Posterior cingulate gyrus (tissue), 11 donors: ENCODE measurements at regions of chr18 and their contacts with region 1.

Region 1: GRCh38 chr18:35580701-35581539 is 620 bp upstream of the GALNT1 start:
- DNase-seq: peak; percentile 35 to 93 (median 53)

Region 2: DNA sequence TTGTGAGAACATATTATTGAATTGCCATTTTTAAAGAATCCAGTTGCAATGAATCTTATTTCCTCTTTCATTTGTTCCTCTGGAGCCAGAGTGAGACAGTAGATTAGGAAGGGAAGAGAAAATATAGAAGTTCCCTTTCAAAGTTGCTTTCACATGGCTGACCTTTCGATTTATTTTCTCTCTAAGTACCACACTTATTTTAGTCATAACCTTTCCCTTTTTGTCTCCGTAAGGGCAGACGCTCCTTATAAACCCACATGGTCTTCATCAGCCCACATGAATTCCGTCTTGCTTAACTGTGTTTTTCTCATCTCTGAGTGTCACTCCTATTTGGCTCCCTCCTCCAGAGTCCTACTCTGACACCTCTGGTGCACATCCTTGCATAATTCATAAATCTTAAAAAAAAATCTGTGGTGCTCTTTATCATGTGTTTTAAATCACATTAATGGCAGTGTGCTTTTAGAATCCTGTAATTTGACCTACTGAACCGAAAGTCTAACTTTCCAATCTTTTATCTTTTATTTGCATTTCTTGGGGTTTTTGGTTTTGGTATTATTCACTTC is 165.3 kb before region 1 on chr18:
- intact Hi-C with region 1: loop called (anchors 10 kb)
- DNase-seq: no peak

Region 3: GRCh38 chr18:35497370-35498197 is 83.3 kb before region 1 on chr18 and contains the start of gene INO80C:
- intact Hi-C with region 1: loop called (anchors 5 kb)
- DNase-seq: peak; percentile 79 to 97 (median 84)

Region 4: GRCh38 chr18:35695803-35696202 is 114.9 kb after region 1 on chr18:
- intact Hi-C with region 1: loop called (anchors 5 kb)
- DNase-seq: peak; percentile 68 to 95 (median 75)

Region 5: GRCh38 chr18:35972197-35973052 is 391.5 kb after region 1 on chr18 and contains the start of gene RMP24:
- intact Hi-C with region 1: loop called (anchors 10 kb)
- DNase-seq: peak; percentile 89 to 99 (median 94)